ENCODE measurements at regions of chr2 and their contacts with region 1.

Region 1: DNA sequence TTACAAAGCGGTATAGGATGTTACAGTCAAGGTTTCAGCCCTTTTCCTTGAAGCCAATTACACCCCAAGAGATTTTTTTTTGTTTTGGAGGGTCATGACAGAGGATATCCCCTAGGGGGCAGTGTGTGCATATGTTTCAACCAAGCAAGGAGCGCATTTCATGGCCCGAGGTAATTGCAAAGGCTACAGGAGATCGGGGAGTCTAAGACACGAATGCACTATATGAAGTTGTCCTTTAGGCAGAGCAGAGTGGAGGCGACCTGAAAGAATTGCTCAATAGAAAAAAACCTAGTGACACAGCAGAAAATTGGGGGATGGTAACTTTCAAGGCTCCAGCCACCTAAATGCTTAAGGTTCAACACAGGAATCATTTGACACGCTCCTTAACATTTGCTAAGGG is 219.8 kb upstream of the PARD3B start:
- DNase-seq: peak; percentile 74
- H3K4me3 ChIP-seq: no peak overlapping the region
- H3K27ac ChIP-seq: no peak overlapping the region
- H3K4me1 ChIP-seq: no peaks in the 10 kb centered on the region
- H3K27me3 ChIP-seq: no peaks in the 10 kb centered on the region
- CTCF ChIP-seq: peak; percentile 87

Region 2: DNA sequence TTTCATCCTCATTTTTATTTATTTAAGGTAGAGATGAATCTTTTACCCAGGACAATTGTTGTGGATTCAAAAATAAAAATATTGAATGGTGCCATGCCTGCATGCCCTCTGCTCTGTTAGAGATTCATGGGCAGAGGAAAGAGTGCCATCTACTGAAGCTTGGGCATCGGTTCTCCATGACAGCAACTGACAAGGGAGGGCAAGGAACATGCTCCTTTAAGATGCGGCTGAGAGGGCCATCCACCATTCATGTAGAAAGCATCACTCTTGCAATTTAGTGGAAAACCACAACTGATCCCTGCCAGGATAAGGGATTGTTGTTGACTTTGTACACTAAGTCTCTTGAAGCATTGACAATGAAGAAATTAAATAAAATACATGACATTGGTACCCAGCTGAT is 299.7 kb after region 1 on chr2:
- intact Hi-C with region 1: loop called (anchors 5 kb)
- DNase-seq: peak; percentile 27
- H3K4me3 ChIP-seq: no peak overlapping the region
- H3K27ac ChIP-seq: no peak overlapping the region
- H3K4me1 ChIP-seq: no peaks in the 10 kb centered on the region
- H3K27me3 ChIP-seq: no peaks in the 10 kb centered on the region
- CTCF ChIP-seq: no peak

Region 3: DNA sequence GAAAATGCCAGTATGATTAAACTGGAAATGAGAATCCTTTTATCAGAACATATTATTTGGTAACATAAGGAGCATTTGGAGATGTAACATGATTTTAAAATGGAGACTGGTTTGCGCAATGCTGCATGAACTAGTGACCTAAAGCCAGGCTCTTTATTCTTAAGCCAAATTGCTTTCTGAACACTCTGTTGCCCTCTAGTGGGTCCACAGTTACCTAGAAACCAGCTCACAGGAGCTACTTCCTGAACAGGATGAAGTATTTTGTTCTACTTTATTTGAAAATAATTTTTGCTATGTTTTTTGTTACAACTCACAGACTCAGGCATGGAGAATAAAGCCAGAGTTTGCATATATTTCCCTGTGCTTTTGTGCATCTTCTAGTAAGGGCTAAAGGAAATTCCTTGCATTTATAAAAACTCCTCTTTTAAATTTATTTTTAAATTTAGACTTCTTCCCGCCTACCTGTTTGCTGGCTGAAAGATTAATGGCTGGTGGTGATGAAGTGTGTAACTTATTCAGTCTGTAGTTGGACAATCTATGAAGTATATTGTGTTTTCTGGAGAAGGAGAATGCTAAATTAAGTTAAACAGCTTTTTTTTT is 366.5 kb after region 1 on chr2:
- intact Hi-C with region 1: loop called (anchors 2 kb)
- DNase-seq: peak; percentile 58
- H3K4me3 ChIP-seq: no peak overlapping the region
- H3K27ac ChIP-seq: no peak overlapping the region
- H3K4me1 ChIP-seq: no peaks in the 10 kb centered on the region
- H3K27me3 ChIP-seq: no peaks in the 10 kb centered on the region
- CTCF ChIP-seq: peak; percentile 72

Region 4: DNA sequence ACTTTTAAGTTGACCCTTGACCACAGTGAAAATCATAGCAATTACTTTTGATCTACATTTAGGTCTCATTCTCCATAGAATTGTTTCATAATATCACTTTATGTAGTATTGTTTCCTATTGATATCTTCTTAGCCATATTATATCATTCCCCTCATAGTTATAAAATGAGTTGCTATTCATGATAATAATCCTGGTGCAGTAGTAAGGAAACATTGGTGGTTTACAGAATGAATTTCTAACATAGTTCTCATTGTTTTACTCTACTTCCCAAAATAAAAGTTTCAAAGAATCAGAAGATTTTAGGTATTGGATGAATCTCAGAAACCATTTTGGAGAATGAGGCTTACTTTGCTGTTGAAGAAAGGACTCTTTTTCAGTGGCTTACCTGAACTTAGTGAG is 465.8 kb after region 1 on chr2:
- intact Hi-C with region 1: no loop called
- DNase-seq: no peak
- H3K4me3 ChIP-seq: no peak overlapping the region
- H3K27ac ChIP-seq: no peak overlapping the region
- H3K4me1 ChIP-seq: no peaks in the 10 kb centered on the region
- H3K27me3 ChIP-seq: no peaks in the 10 kb centered on the region
- CTCF ChIP-seq: no peak

Measured in colonic mucosa (tissue), 4 donors.